ENCODE measurements at regions of chr7 and their contacts with region 1.

Region 1: GRCh38 chr7:108569381-108570145 is at the starts of genes DNAJB9 and THAP5:
- DNase-seq: peak; percentile 100
- H3K4me3 ChIP-seq: peak within 1 kb of the TSS; percentile 79 to 90 (median 84)
- H3K27ac ChIP-seq: peak within 1 kb of the TSS; percentile 97 to 99 (median 98)
- H3K4me1 ChIP-seq: peaks cover 0 to 37% (median 26%) of the 10 kb centered on the region in 4 donors
- H3K27me3 ChIP-seq: no peaks in the 10 kb centered on the region
- CTCF ChIP-seq: no peak
- EP300 ChIP-seq: peak in 1 of 4 donors; percentile 96
- POLR2A ChIP-seq: peak; percentile 85 to 93
- total RNA-seq, gene DNAJB9: 17.2 to 44.3 (median 33.4) TPM
- total RNA-seq, gene THAP5: 28.5 to 37.1 (median 31.5) TPM

Region 2: DNA sequence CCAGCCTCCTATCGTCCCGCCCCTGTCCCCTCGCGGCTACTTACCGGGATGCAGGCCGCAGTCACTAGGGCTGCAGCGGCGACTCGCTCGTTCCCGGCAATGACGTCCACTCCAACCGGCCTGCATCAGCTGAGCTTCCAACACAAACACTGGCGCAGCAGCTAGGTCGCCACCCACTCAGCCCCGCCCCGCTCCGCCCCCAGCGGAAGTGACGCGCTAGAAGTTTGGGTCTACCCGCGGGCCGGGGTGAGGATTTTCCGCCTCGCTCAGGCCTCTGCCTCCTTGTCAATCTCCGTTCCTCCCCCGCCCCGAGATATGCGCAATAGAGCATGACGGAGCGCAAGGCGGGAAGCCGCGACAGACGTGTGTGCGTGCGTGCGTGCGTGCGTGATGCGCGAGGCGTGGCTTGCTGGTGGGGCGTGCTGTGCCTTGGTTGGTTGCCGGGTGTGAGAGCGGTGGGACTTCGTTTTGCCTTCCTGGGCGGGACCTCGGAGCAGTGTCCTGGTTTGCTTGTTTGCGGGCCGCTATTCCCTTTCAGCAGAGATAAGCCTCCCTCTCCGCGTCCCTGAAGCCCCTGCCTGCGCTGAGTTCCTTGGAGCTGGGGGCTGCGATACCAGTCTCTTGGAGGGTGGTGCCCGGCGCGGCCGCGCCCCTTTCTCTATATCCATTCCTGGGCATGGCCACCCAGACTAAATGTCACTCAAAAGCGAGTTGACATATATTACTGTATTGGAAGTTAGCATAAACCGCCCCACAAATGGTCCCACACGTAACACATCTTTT is 43.4 kb before region 1 on chr7 and contains the start of gene PNPLA8:
- intact Hi-C with region 1: loop called (anchors 1 kb)
- DNase-seq: peak; percentile 100
- H3K4me3 ChIP-seq: peak within 1 kb of the TSS; percentile 69 to 78 (median 76)
- H3K27ac ChIP-seq: peak within 1 kb of the TSS; percentile 95 to 99 (median 96)
- H3K4me1 ChIP-seq: peaks cover 0 to 32% (median 27%) of the 10 kb centered on the region in 4 donors
- H3K27me3 ChIP-seq: no peaks in the 10 kb centered on the region
- CTCF ChIP-seq: no peak
- EP300 ChIP-seq: peak in 3 of 4 donors; percentile 28 to 97 (median 78)
- POLR2A ChIP-seq: peak; percentile 84 to 87
- total RNA-seq, gene PNPLA8: 26.3 to 42.9 (median 35.5) TPM